ENCODE measurements at regions of chr6 and their contacts with region 1.

Region 1: GRCh38 chr6:1609648-1610496 is at the start of gene FOXC1:
- DNase-seq: peak; percentile 88
- H3K4me3 ChIP-seq: peak within 1 kb of the TSS; percentile 77
- H3K27ac ChIP-seq: peak within 1 kb of the TSS; percentile 91
- H3K4me1 ChIP-seq: peaks cover 76% of the 10 kb centered on the region
- H3K27me3 ChIP-seq: peaks cover 92% of the 10 kb centered on the region
- CTCF ChIP-seq: no peak
- total RNA-seq, gene FOXC1: 7.1 TPM

Region 2: GRCh38 chr6:993923-994322 is 615.9 kb before region 1 on chr6:
- intact Hi-C with region 1: no loop called
- DNase-seq: no peak
- H3K4me3 ChIP-seq: no peak overlapping the region
- H3K27ac ChIP-seq: no peak overlapping the region
- H3K4me1 ChIP-seq: no peaks in the 10 kb centered on the region
- H3K27me3 ChIP-seq: peaks cover 49% of the 10 kb centered on the region
- CTCF ChIP-seq: no peak

Region 3: DNA sequence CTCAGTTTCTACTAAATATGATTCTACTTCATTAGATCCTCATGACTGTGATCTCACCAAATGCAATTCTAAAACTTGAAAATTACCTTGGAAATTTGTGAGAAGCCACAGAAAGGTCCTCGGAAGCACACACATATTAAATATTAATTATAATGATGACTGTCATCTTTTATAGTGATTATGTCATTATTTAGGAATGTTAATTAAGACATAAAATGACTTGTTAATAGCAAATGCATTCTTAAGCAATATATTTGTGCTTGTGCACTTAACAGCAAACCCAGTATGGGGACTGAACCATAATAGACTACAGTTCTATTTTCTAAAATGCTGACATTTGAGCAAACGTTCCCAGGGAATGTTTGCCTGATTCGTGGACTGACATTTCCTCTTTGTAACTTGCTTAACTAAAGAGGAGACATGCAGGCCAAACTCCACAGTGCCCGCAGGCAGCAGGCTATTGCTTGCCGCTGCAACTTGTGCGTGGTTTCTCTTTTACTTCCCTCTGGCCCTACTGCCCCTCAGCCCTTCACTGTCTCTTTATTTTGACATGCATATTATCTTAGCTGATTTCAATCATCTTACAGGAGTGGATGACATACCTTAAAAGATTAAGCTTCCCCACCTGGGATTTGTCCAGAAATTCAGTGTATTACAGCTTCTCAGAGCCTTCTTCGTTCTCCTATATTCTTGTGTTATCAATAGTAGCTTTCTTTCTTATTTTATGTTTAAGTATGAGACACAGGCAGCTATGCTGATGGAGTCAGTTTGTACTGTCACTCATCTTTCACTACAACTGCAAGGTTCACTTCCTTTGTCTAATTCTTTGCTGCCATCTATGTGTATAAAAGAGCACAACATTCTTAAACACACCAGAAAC is 494.0 kb after region 1 on chr6:
- intact Hi-C with region 1: loop called (anchors 5 kb)
- DNase-seq: no peak
- H3K4me3 ChIP-seq: peak overlapping the region; percentile 41
- H3K27ac ChIP-seq: peak overlapping the region; percentile 57
- H3K4me1 ChIP-seq: peaks cover 6% of the 10 kb centered on the region
- H3K27me3 ChIP-seq: no peaks in the 10 kb centered on the region
- CTCF ChIP-seq: peak; percentile 69

Measured in left ventricle myocardium inferior (tissue), 1 donor.